ENCODE measurements at regions of chr5 and their contacts with region 1.

Region 1: GRCh38 chr5:109921735-109922380 is 232.1 kb downstream of the MAN2A1 start:
- DNase-seq: no peak
- H3K4me3 ChIP-seq: no peak overlapping the region
- H3K27ac ChIP-seq: no peak overlapping the region
- H3K4me1 ChIP-seq: no peaks in the 10 kb centered on the region
- H3K27me3 ChIP-seq: no peaks in the 10 kb centered on the region
- CTCF ChIP-seq: no peak
- EP300 ChIP-seq: no peak
- POLR2A ChIP-seq: no peak

Region 2: DNA sequence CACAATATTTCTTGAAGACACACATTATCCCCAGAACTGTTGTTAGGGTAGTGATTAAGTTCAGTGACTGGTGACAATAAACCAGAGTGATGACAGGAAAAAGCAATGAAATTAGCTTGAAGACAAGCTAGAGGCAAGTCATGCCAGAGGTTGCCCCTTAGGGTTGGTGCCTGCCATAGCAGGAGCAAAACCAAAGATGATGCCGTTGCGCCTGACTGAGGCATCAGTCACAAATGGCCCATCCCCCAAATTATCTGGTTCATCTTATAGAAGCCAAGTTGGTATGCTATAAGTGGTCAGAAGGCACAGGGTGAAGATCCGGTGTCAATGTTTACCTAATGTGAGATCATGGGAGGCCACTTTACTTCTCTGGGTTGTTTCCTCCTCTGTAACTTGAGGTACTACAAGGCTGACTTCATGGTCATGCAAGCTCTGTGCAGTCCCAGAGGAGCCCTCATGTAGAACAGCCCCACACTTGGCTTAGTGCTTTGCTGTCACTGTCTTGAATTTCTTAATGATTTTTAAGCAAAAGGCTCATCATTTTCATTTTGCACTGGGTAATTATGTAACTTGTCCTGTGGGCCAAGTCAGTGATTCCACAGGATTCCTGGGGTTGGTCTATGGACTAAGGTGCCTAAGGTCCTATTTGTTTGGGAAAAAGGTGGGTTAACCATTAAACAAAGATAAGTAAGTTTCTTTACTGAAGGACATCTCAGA is 20.8 kb before region 1 on chr5:
- in situ Hi-C with region 1: no loop called
- intact Hi-C with region 1: loop called (anchors 1 kb)
- DNase-seq: no peak
- H3K4me3 ChIP-seq: no peak overlapping the region
- H3K27ac ChIP-seq: no peak overlapping the region
- H3K4me1 ChIP-seq: peaks cover 0 to 7% (median 0%) of the 10 kb centered on the region in 4 donors
- H3K27me3 ChIP-seq: no peaks in the 10 kb centered on the region
- CTCF ChIP-seq: no peak
- EP300 ChIP-seq: no peak
- POLR2A ChIP-seq: no peak

Region 3: GRCh38 chr5:109942646-109943045 is 20.8 kb after region 1 on chr5:
- in situ Hi-C with region 1: no loop called
- intact Hi-C with region 1: loop called (anchors 1 kb)
- DNase-seq: no peak
- H3K4me3 ChIP-seq: no peak overlapping the region
- H3K27ac ChIP-seq: no peak overlapping the region
- H3K4me1 ChIP-seq: no peaks in the 10 kb centered on the region
- H3K27me3 ChIP-seq: no peaks in the 10 kb centered on the region
- CTCF ChIP-seq: no peak
- EP300 ChIP-seq: no peak
- POLR2A ChIP-seq: no peak